GM10248 (cell line): ENCODE measurements at regions of chr2 and their contacts with region 1.

Region 1: GRCh38 chr2:177263451-177264208 is 897 bp downstream of the NFE2L2 start:
- DNase-seq: peak; percentile 83
- CTCF ChIP-seq: peak; percentile 94

Region 2: GRCh38 chr2:177164584-177165052 is 99.0 kb before region 1 on chr2:
- CTCF ChIA-PET with region 1: interaction called, 53 read pairs
- POLR2A ChIA-PET with region 1: interaction called, 9 read pairs
- DNase-seq: peak; percentile 63
- CTCF ChIP-seq: peak; percentile 99

Region 3: GRCh38 chr2:177225965-177226360 is 37.7 kb before region 1 on chr2:
- CTCF ChIA-PET with region 1: interaction called, 21 read pairs
- POLR2A ChIA-PET with region 1: interaction called, 4 read pairs
- DNase-seq: no peak
- CTCF ChIP-seq: no peak

Region 4: DNA sequence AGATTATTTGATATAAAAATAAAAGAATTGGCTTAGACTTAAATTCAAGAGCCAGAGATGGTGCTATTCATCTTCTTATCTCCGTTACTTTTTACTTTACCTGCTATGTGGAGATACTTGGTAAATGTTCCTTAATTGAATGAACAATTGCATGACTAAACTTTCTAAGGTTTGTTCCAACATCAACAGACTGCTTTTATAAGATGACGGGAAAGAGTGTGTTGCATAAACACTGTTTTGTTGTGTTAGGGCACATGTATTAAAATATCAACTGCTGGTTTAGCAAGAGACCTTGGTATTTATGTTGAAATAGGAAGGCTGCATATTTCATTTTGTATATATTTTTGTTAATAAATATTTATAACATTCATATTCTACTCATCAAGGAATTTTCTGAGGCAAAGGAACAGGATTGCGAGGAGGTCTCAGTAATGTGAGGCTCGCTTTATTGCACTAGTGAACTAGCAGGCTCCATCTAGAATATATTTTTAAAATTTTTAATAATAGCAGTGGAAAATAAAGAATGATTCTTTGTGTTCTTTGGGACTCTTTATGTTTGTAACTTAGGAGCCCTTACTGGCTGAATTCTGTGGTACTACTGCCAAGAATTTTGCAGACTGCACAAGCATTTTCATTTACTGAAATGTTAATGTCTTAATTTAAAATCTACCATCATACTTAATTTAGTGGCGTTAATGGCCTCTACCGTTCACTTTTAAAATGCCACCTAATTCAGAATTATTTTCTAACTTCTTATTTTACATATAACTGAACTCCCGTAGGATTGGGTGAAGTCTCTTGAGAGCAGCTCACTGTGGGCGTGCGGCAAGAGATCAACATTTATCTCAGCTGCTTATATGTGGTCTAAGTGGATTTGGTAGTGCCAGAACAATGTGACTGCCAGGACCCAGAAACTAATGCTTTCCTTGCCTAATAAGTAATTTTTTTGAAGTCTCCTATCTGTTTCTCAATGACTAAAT is 11.7 kb after region 1 on chr2:
- CTCF ChIA-PET with region 1: interaction called, 22 read pairs
- POLR2A ChIA-PET with region 1: no interaction called
- DNase-seq: no peak
- CTCF ChIP-seq: no peak

Region 5: GRCh38 chr2:177289824-177290628 is 26.4 kb after region 1 on chr2:
- CTCF ChIA-PET with region 1: interaction called, 37 read pairs
- POLR2A ChIA-PET with region 1: interaction called, 3 read pairs
- DNase-seq: peak; percentile 37
- CTCF ChIP-seq: no peak

Region 6: DNA sequence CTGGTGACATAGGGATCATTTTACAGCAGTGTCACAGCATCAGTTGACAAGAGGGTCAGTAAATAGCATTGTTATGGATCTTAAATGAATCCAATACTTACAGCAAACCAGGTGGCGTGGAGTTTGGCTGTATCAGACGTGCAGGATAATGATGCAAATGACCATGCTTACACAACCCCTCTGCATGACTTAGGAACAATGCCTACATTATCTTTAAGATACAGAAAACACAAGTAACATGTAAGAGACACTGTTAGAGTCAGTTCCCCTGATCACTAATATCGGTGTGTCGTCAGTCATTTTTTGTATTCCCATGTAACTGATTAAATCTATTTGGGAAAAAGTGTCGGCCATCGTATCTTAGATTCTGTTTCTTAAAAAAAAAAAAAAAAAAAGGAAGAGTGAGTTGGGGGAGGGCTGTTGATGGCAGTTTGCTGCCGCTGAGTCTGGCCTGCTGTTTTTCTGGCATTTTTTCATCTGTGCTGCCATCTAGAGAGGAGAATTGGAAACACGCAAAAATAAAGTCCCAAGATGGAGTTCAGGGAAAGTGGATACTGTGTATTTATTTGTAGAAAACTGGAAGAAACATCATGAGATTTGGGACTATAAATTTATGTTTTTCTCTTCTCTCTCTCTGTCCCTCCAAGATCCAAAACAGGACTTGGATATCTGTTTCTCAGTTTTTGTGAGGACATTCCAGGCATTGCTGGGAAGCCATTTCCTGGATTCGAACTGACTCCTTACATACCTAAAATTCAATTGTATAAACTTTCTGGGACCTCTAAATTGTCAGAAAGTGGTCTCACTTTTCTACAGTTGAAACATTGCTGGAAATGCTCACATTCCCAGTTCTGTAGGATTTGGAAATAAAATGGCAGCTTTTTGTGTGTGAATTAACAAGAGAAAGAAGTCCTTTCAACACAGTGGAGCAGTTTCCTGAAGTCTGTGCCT is 68.7 kb after region 1 on chr2:
- CTCF ChIA-PET with region 1: interaction called, 18 read pairs
- POLR2A ChIA-PET with region 1: interaction called, 3 read pairs
- DNase-seq: peak; percentile 50
- CTCF ChIP-seq: peak; percentile 66

Region 7: GRCh38 chr2:177413703-177414102 is 150.1 kb after region 1 on chr2:
- CTCF ChIA-PET with region 1: interaction called, 40 read pairs
- POLR2A ChIA-PET with region 1: no interaction called
- DNase-seq: no peak
- CTCF ChIP-seq: no peak

Region 8: GRCh38 chr2:177708660-177709444 is 445.2 kb after region 1 on chr2:
- CTCF ChIA-PET with region 1: no interaction called
- POLR2A ChIA-PET with region 1: no interaction called
- DNase-seq: no peak
- CTCF ChIP-seq: no peak